ENCODE measurements at regions of chr19 and their contacts with region 1.

Region 1: DNA sequence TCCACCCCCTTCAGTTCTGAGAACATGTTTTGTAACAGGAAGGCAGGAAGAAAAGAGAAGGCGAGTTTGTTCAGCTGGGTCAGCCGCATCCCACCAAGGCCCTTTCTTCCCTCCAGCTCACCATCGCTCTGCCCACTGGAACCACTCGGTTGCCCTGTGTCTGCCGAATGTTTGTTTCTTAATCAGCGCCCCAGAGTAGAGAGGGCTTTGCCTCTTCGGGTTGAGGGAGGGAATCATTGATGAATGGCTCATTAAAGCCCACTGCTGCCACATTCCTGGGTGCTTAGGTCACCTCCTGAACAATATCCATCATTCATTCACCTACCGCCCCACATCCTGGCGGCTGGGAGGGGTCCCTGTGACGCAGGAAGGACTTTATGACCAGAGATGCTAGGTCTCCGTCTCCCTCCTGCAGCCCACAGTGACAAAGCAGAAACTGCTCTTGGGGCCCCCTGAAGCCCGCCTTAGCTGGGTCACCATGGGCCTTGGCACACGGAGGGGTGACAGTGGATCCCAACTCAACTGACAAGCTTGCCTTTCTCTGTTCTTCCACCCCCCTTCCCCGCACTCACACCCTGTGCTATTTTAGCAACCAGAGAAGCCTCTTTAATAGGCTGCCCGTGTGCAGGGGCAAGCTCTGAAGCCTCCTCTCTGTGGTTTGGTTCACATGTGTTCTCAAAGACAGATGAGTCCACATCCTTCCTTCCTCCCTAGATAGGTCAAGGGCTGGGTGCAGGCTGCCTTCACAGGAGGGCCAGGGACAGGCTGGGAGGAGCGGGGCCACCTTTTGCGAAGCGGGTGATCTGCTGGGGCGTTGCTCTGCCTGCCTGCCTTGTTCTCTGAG is 46.2 kb downstream of the ACTN4 start:
- DNase-seq: peak; percentile 88 to 94
- H3K4me3 ChIP-seq: peak overlapping the region; percentile 49; the same call in 1 of the 2 replicates
- H3K27ac ChIP-seq: peak overlapping the region; percentile 100
- H3K4me1 ChIP-seq: peaks cover 65% of the 10 kb centered on the region
- H3K27me3 ChIP-seq: no peaks in the 10 kb centered on the region
- CTCF ChIP-seq: no peak

Region 2: GRCh38 chr19:38544034-38544958 is 149.3 kb before region 1 on chr19:
- CTCF ChIA-PET with region 1: interaction called, 17 read pairs
- POLR2A ChIA-PET with region 1: no interaction called
- intact Hi-C with region 1: no loop called
- DNase-seq: peak; percentile 60 to 87
- H3K4me3 ChIP-seq: no peak overlapping the region
- H3K27ac ChIP-seq: peak overlapping the region; percentile 47
- H3K4me1 ChIP-seq: peaks cover 24% of the 10 kb centered on the region
- H3K27me3 ChIP-seq: no peaks in the 10 kb centered on the region
- CTCF ChIP-seq: peak; percentile 83

Region 3: DNA sequence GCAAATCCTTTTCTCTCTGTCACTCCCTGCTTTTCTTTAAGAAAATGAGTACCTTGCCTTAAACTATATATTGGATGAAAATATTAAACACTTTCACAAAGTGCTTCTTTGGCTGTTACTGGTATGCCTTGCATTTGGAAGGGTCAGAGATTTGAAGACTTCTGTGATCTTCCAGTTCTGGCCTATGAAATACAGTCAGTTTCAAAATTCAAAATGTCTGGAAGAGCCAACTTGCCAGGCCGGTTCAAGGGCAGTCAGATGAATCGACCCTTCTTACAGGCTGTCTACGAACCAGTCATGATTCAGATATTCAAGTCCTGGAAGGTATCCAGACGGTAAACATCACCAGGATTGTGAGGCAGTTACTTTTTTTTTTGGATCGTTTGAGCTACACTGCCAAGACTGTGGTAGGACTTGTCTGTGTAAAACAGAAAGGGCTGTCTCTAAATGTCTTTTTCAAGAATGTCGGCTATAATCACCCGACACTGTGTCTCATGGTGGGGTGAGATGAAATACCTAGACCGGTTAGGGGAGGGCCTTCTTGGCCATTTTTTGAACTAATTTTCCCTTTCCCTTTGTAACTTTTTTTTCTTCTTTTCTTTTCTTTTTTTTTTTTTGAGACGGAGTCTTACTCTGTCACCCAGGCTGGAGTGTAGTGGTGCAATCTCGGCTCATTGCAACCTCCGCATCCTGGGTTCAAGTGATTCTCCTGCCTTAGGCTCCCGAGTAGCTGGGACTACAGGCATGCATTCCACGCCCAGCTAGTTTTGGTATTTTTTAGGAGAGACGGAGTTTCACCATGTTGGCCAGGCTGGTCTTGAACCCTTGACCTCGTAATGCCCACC is 34.9 kb before region 1 on chr19:
- CTCF ChIA-PET with region 1: interaction called, 15 read pairs
- POLR2A ChIA-PET with region 1: interaction called, 13 read pairs
- intact Hi-C with region 1: loop called (anchors 1 kb)
- DNase-seq: peak; percentile 70 to 98
- H3K4me3 ChIP-seq: peak overlapping the region; percentile 54
- H3K27ac ChIP-seq: peak overlapping the region; percentile 99
- H3K4me1 ChIP-seq: peaks cover 97% of the 10 kb centered on the region
- H3K27me3 ChIP-seq: no peaks in the 10 kb centered on the region
- CTCF ChIP-seq: no peak

Region 4: DNA sequence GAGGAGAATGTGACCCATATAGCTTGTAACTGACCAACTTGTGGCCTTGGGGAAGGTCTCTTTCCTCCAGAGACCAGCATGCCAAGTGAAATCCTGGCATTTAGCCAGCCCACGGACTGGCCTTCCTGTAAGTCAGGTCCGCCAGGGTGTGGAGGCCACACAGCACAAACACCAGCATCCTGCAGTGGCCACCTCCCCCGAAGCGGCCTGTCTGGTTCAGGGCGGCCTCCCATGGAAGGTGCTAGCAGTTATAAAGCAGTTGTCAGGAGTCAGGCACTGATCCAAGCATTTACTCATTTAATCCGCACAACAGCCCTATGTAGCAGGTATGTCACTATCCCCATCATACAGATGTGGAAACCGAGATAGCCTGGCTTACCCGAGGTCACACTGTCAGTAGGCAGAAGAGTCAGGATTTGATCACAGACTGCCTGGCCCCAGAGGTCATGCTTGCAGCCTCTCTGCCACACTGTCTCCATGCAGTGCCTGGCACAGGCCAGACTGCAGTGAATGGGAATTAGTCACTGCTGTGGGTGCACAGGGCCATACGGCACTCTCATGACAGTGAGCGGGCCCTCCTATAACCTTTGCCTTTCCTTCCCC is 14.0 kb after region 1 on chr19:
- CTCF ChIA-PET with region 1: interaction called, 3 read pairs
- POLR2A ChIA-PET with region 1: interaction called, 21 read pairs
- intact Hi-C with region 1: loop called (anchors 1 kb)
- DNase-seq: peak; percentile 69 to 84
- H3K4me3 ChIP-seq: no peak overlapping the region
- H3K27ac ChIP-seq: peak overlapping the region; percentile 46
- H3K4me1 ChIP-seq: peaks cover 26% of the 10 kb centered on the region
- H3K27me3 ChIP-seq: no peaks in the 10 kb centered on the region
- CTCF ChIP-seq: no peak

Region 5: GRCh38 chr19:38718747-38719543 is 25.3 kb after region 1 on chr19:
- CTCF ChIA-PET with region 1: no interaction called
- POLR2A ChIA-PET with region 1: interaction called, 6 read pairs
- intact Hi-C with region 1: loop called (anchors 1 kb)
- DNase-seq: peak; percentile 56 to 93
- H3K4me3 ChIP-seq: no peak overlapping the region
- H3K27ac ChIP-seq: peak overlapping the region; percentile 80
- H3K4me1 ChIP-seq: peaks cover 11% of the 10 kb centered on the region
- H3K27me3 ChIP-seq: no peaks in the 10 kb centered on the region
- CTCF ChIP-seq: no peak; the same call in 1 of the 2 replicates

Region 6: DNA sequence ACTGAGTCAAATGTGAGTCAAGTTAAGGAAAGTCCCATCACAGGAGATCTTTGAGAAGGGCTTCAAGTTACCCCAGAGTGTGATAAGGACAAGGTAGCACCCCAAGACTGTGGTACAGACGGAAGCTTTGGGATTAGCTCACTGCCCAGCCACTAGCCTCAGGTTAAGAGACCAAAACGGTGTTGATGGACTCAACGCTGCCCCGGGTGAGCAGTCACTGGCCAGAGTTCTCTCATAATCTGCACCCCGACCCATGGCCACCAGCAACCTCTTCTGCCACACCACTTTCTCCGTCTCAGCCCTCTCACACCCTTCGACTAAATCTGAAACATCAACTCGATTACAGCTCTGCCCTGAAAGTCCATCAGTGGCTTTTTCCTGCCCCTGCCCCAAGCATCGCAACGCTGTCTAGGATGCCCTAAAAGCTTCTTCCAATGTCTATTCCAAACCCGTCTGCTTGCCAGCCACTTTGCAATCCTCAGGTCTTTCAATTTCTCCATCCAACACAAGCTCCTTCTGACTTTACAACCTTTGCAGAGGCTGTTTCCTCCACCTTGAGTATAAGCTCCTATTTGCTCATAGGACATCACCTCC is 150.6 kb after region 1 on chr19:
- CTCF ChIA-PET with region 1: interaction called, 5 read pairs
- POLR2A ChIA-PET with region 1: interaction called, 16 read pairs
- intact Hi-C with region 1: no loop called
- DNase-seq: no peak
- H3K4me3 ChIP-seq: no peak overlapping the region
- H3K27ac ChIP-seq: no peak overlapping the region; the same call in 1 of the 2 replicates
- H3K4me1 ChIP-seq: peaks cover 32% of the 10 kb centered on the region
- H3K27me3 ChIP-seq: no peaks in the 10 kb centered on the region
- CTCF ChIP-seq: no peak

Region 7: GRCh38 chr19:38862321-38863059 is 168.9 kb after region 1 on chr19:
- CTCF ChIA-PET with region 1: no interaction called
- POLR2A ChIA-PET with region 1: no interaction called
- intact Hi-C with region 1: no loop called
- DNase-seq: peak in 1 of 2 experiments; percentile 53
- H3K4me3 ChIP-seq: no peak overlapping the region
- H3K27ac ChIP-seq: peak overlapping the region; percentile 99
- H3K4me1 ChIP-seq: peaks cover 52% of the 10 kb centered on the region
- H3K27me3 ChIP-seq: no peaks in the 10 kb centered on the region
- CTCF ChIP-seq: no peak

Measured in PC-9 (cell line).